ENCODE measurements at regions of chr4 and their contacts with region 1.

Region 1: GRCh38 chr4:2125023-2125422 is 65.9 kb downstream of the NAT8L start:
- DNase-seq: no peak
- ATAC-seq: no peak

Region 2: GRCh38 chr4:2094545-2094944 is 30.5 kb before region 1 on chr4:
- intact Hi-C with region 1: loop called (anchors 1 kb)
- DNase-seq: no peak
- ATAC-seq: no peak